H1 (cell line): ENCODE measurements at regions of chr7 and their contacts with region 1.

Region 1: GRCh38 chr7:127091620-127092019 is 161.1 kb downstream of the GRM8 start:
- DNase-seq: no peak
- H3K4me3 ChIP-seq: no peak overlapping the region
- H3K27ac ChIP-seq: no peak overlapping the region
- H3K4me1 ChIP-seq: no peaks in the 10 kb centered on the region; a peak in 2 of 7 replicates
- H3K27me3 ChIP-seq: no peaks in the 10 kb centered on the region
- CTCF ChIP-seq: no peak
- EP300 ChIP-seq: no peak
- POLR2A ChIP-seq: no peak
- RAD21 ChIP-seq: no peak

Region 2: DNA sequence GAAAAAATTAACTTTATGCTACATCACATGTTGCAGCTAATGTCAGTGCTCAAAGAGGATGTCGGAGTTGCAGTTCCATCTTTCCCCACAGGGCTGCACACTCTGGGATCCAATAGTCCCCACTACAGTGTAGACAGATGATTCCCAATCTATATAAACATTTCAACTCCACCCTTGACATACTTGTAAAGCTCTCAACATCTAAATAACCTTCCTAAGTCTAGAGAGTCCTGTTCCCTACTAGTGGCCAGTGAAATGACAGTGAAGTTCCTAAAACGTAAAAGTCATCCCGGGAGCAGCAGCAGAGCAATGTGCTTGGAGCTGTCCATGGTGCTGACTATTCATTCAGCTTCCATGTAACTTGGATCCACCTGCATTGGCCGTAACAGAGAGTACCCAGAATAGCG is 16.0 kb after region 1 on chr7:
- CTCF ChIA-PET with region 1: interaction called, 16 read pairs
- POLR2A ChIA-PET with region 1: no interaction called
- DNase-seq: peak in 1 of 2 experiments; percentile 75
- H3K4me3 ChIP-seq: no peak overlapping the region
- H3K27ac ChIP-seq: no peak overlapping the region
- H3K4me1 ChIP-seq: no peaks in the 10 kb centered on the region
- H3K27me3 ChIP-seq: no peaks in the 10 kb centered on the region
- CTCF ChIP-seq: peak in 2 of 3 experiments; percentile 39 to 43; a peak in 2 of 4 replicates
- EP300 ChIP-seq: no peak
- POLR2A ChIP-seq: no peak
- RAD21 ChIP-seq: no peak; a peak in 1 of 4 replicates